GM13976 (cell line): ENCODE measurements at regions of chr6 and their contacts with region 1.

Region 1: DNA sequence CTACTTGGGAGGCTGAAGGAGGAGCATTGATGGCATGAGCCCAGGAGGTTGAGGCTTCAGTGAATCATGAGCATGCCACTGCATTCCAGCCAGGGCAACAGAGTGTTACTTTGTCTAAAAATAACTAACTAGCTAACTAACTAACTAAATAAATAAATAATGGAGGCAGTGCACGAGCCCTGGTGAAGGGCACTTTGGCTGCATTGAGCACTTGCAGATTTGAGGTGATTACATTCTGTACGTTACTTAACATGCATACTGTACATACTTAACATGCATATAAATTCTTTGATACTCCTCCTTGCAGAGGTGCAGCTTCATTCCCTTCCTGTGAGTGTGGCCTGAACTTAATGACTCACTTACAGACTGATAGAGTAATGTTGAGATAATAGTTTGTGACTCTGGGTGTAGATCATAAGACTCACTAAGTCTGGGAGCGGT is 10.7 kb downstream of the HLA-A start:
- DNase-seq: no peak
- CTCF ChIP-seq: no peak

Region 2: DNA sequence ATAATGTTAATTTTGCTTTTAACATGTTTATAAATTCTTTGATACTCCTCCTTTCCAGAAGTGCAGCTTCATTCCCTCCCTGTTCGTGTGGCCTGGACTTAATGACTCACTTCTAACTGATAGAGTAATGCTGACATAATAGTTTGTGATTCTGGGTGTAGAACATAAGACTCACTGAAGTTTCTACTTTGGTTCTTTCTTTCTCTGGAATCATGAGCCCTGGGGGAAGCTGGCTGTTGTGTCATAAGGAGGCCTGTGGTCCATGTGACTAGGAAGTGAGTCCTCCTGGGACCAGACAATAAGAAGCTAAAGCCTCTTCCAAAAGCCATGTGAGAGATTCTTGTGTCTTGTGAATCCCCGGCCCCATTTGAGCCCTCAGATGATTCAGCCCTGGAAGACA is 155.9 kb before region 1 on chr6:
- in situ Hi-C with region 1: loop called (anchors 5 kb)
- DNase-seq: no peak
- CTCF ChIP-seq: no peak

Region 3: DNA sequence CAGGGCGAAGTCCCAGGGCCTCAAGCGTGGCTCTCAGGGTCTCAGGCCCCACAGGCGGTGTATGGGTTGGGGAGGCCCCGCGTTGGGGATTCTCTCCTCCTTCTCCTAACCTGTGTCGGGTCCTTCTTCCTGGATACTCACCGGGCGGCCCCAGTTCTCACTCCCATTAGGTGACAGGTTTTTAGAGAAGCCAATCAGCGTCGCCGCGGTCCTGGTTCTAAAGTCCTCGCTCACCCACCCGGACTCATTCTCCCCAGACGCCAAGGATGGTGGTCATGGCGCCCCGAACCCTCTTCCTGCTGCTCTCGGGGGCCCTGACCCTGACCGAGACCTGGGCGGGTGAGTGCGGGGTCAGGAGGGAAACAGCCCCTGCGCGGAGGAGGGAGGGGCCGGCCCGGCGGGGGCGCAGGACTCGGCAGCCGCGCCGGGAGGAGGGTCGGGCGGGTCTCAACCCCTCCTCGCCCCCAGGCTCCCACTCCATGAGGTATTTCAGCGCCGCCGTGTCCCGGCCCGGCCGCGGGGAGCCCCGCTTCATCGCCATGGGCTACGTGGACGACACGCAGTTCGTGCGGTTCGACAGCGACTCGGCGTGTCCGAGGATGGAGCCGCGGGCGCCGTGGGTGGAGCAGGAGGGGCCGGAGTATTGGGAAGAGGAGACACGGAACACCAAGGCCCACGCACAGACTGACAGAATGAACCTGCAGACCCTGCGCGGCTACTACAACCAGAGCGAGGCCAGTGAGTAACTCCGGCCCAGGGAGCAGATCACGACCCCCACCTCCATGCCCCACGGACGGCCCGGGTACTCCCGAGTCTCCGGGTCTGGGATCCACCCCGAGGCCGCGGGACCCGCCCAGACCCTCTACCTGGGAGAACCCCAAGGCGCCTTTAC is 125.2 kb before region 1 on chr6 and contains the start of gene HLA-G:
- in situ Hi-C with region 1: no loop called
- DNase-seq: no peak
- CTCF ChIP-seq: no peak